ENCODE measurements at regions of chr17 and their contacts with region 1.

Region 1: GRCh38 chr17:82236142-82236981 is 7.5 kb downstream of the SLC16A3 start:
- DNase-seq: peak; percentile 79
- H3K4me3 Mint-ChIP-seq: no peak overlapping the region
- H3K27ac Mint-ChIP-seq: peak overlapping the region; percentile 70
- H3K4me1 Mint-ChIP-seq: peaks cover 66% of the 10 kb centered on the region
- H3K27me3 Mint-ChIP-seq: no peaks in the 10 kb centered on the region

Region 2: GRCh38 chr17:82309656-82310570 is 73.6 kb after region 1 on chr17:
- CTCF ChIA-PET with region 1: no interaction called
- DNase-seq: no peak
- H3K4me3 Mint-ChIP-seq: no peak overlapping the region
- H3K27ac Mint-ChIP-seq: peak overlapping the region; percentile 53
- H3K4me1 Mint-ChIP-seq: peaks cover 26% of the 10 kb centered on the region
- H3K27me3 Mint-ChIP-seq: peaks cover 26% of the 10 kb centered on the region

Region 3: DNA sequence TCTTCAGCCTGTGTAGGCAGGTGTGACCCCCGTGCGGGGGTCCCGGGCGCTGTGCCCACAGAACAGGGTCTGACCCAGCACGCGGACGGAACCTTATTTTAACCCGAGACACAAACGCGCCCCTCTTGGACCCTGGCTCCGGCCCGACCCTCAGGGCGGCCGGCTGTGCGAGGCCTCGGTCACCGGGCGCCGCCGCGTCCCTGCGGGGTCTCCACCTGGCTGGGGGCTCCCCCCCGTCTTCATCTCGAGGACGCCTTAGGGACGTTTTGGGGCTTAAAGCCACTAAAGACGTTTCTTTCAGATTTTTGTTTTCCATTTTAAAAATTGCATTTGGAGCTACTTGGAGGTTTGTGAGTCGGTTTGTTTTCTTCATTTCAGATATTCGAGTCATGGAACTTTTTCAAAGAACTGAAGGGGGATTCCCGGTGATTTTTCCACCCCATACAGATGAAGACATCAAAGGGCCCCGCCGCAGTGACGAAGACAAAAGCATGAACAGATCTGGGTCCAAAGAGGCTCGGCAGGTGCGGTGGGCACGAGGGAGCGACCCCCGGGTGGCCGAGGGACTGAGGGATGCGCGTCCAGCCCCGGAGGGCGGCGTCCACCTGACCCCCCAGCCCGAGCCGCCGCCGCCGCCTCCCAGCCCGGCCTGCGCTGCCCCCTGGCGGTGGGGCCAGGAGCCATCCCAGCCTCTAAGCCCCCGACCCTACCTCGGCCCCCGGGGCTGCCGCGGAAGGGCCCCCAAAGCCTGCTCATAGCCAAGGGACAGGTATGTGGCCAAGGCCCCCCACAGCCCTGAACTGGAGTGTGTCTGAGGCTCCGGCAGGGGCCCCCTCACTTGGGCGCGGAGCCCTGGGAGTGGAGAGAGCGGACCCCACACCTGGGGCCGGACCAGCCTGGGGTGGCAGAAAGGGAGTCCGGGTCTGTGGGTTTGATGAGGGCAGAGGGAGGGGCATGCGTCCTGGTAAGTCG is 84.9 kb after region 1 on chr17:
- CTCF ChIA-PET with region 1: interaction called, 10 read pairs
- DNase-seq: peak; percentile 82
- H3K4me3 Mint-ChIP-seq: peak overlapping the region; percentile 66
- H3K27ac Mint-ChIP-seq: peak overlapping the region; percentile 70
- H3K4me1 Mint-ChIP-seq: peaks cover 15% of the 10 kb centered on the region
- H3K27me3 Mint-ChIP-seq: peaks cover 8% of the 10 kb centered on the region

Region 4: GRCh38 chr17:82351716-82352488 is 115.5 kb after region 1 on chr17:
- CTCF ChIA-PET with region 1: interaction called, 11 read pairs
- DNase-seq: peak; percentile 89
- H3K4me3 Mint-ChIP-seq: no peak overlapping the region
- H3K27ac Mint-ChIP-seq: no peak overlapping the region
- H3K4me1 Mint-ChIP-seq: no peaks in the 10 kb centered on the region
- H3K27me3 Mint-ChIP-seq: peaks cover 68% of the 10 kb centered on the region